Stomach (tissue), 19 donors: ENCODE measurements at regions of chr15 and their contacts with region 1.

Region 1: DNA sequence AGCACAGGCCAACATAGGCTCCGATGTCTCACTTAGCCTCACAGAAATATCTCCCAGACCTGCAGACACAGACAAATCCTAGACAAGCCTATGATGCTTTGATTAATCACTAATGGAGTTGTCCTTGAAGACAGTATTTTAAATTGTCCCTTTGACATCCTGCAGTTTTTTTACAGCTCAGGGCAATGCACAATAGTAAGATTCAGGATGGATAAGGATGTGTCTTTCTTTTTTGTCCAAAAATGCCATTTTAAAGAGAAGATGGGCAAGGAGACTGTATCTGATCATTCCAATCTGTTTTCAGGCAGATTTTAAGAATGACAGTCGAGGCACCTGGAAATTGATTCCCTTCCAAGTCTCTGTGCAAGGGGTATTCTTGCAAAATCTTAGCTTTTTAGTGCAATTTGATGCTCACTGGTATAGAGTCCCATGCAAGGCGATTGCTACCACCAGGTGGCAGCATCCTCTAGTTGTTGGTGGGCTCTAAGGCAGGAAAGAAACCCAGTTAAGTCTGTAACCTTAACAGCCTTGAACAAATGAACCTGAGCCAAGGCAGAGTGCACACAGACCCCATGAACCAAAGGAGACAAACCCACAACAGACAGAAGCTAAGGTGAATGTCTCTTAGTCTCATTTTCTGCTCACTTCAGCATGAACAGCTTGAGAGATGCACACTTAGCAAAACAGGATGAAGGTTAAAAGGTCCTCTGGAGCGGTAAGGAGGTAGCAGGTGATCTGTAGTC is 51.2 kb upstream of the MINAR1 start:
- DNase-seq: peak; percentile 84 to 91
- H3K4me3 ChIP-seq: no peak overlapping the region
- H3K27ac ChIP-seq: no peak overlapping the region
- H3K4me1 ChIP-seq: peaks cover 5 to 7% (median 6%) of the 10 kb centered on the region in 4 donors
- H3K27me3 ChIP-seq: no peaks in the 10 kb centered on the region
- CTCF ChIP-seq: peak in 5 of 7 experiments; percentile 64 to 85 (median 84)
- EP300 ChIP-seq: no peak
- POLR2A ChIP-seq: no peak

Region 2: GRCh38 chr15:79065706-79066376 is 315.1 kb before region 1 on chr15:
- intact Hi-C with region 1: no loop called
- DNase-seq: peak in 1 of 2 donors; percentile 28
- H3K4me3 ChIP-seq: no peak overlapping the region
- H3K27ac ChIP-seq: no peak overlapping the region
- H3K4me1 ChIP-seq: no peaks in the 10 kb centered on the region
- H3K27me3 ChIP-seq: peaks cover 0 to 10% (median 7%) of the 10 kb centered on the region in 3 donors
- CTCF ChIP-seq: no peak
- EP300 ChIP-seq: no peak
- POLR2A ChIP-seq: no peak

Region 3: DNA sequence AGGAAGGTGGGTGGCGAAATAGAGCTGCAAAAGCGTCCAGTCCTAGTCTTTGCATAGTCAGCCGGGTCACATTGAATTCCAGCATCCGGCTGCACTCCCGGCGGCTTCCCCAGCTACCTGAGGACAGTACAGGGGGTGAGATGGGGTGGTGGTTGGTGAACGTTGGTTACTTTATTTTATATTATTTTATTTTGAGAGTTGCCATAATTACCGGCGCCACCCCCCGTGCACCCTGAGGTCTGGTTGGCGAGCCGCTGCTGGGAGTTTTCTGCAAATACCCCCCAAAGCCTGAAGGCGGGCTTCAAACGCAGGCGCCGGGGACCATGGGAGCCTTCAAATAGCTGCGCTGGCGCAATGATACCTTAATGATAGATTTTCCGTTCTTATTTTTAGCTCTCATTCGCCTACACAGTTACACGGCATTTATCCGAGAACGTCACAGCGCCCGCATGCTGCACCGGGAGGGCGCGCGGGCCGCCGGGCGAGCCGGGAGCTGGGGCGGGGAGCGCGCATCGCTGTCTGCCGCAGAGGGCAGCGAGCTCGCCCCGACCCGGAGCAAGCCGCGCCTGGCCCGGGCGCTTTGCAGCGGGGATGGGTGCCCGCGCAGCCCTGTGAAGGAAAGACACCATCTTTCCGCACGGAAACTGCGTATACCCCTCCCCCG is 289.6 kb before region 1 on chr15:
- intact Hi-C with region 1: no loop called
- DNase-seq: peak in 1 of 2 donors; percentile 54
- H3K4me3 ChIP-seq: peak overlapping the region in 3 of 4 donors; percentile 11 to 36 (median 33)
- H3K27ac ChIP-seq: no peak overlapping the region
- H3K4me1 ChIP-seq: peaks cover 13 to 28% (median 25%) of the 10 kb centered on the region in 4 donors
- H3K27me3 ChIP-seq: peaks cover 31 to 99% (median 63%) of the 10 kb centered on the region in 3 donors
- CTCF ChIP-seq: no peak
- EP300 ChIP-seq: no peak
- POLR2A ChIP-seq: no peak

Region 4: DNA sequence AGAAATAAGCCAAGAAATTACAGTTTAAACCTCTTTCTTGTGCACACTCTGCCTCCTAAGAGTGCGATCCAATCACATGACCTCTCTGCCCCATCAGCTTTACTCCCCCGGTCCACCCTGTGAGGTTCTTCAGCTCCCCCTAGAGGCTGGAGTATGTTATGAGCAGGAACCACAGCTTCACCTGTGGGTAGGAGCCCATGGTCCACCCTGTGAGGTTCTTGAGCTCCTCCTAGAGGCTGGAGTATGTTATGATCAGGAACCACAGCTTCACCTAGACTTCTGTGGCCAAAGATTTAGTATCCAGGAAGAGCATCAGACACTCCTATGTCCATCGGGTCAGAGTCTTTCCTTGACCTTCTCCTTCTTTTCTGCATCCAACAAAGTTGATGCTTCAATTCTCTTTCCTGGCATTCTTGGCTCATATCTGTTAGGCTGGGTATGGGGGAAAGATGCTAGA is 215.2 kb after region 1 on chr15:
- intact Hi-C with region 1: loop called (anchors 10 kb)
- DNase-seq: peak; percentile 60 to 90
- H3K4me3 ChIP-seq: no peak overlapping the region
- H3K27ac ChIP-seq: no peak overlapping the region
- H3K4me1 ChIP-seq: no peaks in the 10 kb centered on the region
- H3K27me3 ChIP-seq: peaks cover 0 to under 1% (median 0%) of the 10 kb centered on the region in 3 donors
- CTCF ChIP-seq: peak in 5 of 7 experiments; percentile 54 to 95 (median 70)
- EP300 ChIP-seq: no peak
- POLR2A ChIP-seq: no peak